Brain microvascular endothelial cell (primary cell): ENCODE measurements at regions of chr11 and their contacts with region 1.

Region 1: DNA sequence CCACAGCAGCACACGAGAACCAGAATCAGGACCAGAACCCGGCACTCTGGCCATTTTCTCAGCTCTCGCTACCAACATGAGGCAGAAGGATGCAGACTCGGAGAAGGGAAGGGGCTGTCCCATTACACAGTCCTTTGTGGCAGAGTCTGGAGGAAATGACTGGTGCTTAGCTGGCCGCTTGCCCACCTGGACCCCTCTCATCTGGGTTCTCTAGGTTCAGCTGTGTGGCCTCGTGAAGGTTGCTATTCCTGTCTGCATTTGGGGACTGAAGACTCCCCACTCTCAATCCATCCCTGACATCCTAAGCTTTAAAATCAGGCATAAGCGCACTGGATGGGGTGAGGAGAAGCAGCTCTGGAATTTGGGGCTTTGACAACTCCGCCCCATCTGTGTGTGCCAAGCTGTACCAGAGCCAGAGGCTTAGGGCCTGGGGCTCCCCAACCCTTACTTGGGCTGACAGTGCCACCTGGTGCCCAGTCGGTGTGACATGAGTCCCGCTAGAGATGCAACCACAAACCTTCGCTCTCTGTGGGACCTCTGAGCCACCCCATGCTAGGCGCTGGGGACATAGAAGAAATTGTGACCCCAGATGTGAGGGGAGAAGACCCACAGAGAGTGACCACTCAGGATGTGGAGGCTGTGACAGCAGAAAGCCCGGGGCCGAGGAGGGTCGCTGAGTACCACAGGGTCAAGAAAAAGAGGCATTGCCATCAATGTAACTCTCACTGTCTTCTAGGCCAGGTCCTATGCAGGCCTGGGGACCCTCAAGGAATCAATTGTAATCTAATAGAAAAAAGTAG is 35.9 kb upstream of the FCHSD2 start:
- DNase-seq: peak; percentile 65
- H3K4me3 ChIP-seq: no peak overlapping the region
- H3K27ac ChIP-seq: no peak overlapping the region
- H3K27me3 ChIP-seq: no peaks in the 10 kb centered on the region
- CTCF ChIP-seq: peak; percentile 87

Region 2: DNA sequence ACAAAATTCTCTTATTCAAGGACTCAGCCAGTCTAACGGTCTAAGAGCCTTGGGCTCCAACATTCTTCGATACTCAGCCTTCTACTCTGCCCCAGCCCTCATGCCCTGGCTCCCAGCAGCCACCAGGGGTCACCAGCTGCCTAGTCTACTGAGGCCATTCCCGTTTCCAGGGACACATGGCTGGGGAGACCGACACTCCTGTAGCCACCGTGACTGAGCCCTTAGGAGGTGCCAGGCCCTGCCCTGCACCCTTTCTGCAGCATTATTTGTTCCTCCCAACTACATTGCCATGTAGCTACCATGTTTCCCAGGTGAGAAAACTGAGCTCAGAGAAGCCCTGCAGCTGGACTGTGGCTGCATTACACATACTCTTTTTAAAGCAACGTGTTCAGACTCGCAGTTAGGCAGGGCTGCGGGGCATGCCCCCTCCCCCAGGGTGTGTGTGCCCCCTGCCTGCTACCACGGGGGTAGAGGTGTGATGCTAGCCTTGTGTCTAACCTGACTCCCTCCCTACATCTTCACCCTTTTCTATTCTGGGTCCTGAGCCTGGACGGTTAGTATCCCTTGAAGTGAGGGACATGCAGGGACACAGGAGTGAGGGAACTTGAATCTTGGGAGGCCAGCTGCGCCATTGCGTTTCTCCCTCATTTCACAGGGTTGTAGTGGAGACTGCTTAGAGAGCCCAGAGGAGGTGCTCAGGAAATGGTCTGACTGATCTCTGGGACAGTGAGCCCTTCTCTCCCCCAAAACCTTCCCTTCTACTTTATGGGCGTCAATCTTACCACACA is 346.3 kb before region 1 on chr11:
- in situ Hi-C with region 1: loop called (anchors 25 kb)
- DNase-seq: peak; percentile 63
- H3K4me3 ChIP-seq: no peak overlapping the region
- H3K27ac ChIP-seq: no peak overlapping the region
- H3K27me3 ChIP-seq: no peaks in the 10 kb centered on the region
- CTCF ChIP-seq: peak; percentile 99

Region 3: DNA sequence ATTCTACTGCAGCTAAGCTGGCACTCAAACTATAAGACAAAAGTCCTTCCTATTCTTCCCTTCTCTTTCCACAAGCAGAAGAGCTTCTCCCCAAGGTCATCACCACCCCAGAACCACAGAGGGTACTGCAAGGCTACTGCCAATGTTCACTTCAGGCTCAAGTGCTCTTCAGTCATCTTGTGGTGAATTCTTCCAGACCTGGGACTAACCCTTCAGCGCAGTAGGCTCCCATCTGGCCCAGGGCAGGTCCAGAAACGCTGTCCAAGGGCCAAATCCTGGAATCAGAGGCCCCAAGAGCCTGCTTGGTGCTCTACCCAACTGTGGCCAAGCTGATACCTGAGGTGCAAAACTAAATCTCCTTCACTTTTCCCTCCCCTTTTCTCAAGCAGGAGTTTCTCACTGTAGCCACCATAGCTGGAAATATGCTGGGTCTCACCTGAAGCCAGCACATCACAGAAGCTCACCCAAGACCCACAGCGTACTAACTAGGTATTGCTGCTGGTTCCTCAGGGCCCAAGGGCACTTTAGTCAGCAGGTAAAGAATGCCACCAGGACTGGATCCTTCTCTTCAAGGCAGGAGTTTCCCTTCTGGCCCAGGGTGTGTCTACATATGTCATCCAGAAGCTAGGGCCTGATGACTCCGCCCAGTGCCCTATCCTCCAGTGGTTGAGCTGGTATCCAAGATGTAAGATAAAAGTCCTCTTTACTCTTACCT is 63.7 kb before region 1 on chr11:
- in situ Hi-C with region 1: no loop called
- DNase-seq: no peak
- H3K4me3 ChIP-seq: no peak overlapping the region
- H3K27ac ChIP-seq: no peak overlapping the region
- H3K27me3 ChIP-seq: no peaks in the 10 kb centered on the region
- CTCF ChIP-seq: no peak